Naive thymus-derived CD4-positive, alpha-beta T cell (primary cell): ENCODE measurements at regions of chr3 and their contacts with region 1.

Region 1: DNA sequence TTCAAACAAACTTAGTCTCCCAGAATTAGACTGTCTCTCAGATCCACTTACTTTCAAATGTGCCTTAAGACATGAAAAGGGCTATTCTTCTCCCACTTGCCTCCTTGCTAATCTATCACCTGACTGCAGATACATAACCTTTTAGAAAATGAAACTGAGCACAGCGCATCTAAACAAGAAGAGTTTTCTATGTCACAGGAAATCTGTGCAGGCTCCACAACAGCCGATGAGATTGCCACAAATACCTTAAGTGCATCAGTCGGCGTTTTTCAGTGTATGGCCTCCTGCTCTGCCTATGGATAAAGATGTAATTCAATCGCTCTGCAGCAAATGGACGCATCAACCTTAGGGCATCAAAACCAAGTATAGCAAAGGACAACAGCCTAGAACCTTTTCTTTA is 544.2 kb downstream of the FOXP1 start:
- DNase-seq: peak in 6 of 9 donors; percentile 39 to 61 (median 48)
- ATAC-seq: peak; percentile 85
- H3K4me3 ChIP-seq: no peak overlapping the region
- H3K4me3 Mint-ChIP-seq: peak overlapping the region; percentile 28 to 79 (median 67)
- H3K27ac ChIP-seq: peak overlapping the region; percentile 16
- H3K27ac Mint-ChIP-seq: peak overlapping the region; percentile 66 to 91 (median 81)
- H3K4me1 ChIP-seq: peaks cover 15 to 55% of the 10 kb centered on the region in 2 donors
- H3K4me1 Mint-ChIP-seq: peaks cover 45 to 99% (median 90%) of the 10 kb centered on the region in 7 donors
- H3K27me3 ChIP-seq: no peaks in the 10 kb centered on the region
- H3K27me3 Mint-ChIP-seq: no peaks in the 10 kb centered on the region

Region 2: DNA sequence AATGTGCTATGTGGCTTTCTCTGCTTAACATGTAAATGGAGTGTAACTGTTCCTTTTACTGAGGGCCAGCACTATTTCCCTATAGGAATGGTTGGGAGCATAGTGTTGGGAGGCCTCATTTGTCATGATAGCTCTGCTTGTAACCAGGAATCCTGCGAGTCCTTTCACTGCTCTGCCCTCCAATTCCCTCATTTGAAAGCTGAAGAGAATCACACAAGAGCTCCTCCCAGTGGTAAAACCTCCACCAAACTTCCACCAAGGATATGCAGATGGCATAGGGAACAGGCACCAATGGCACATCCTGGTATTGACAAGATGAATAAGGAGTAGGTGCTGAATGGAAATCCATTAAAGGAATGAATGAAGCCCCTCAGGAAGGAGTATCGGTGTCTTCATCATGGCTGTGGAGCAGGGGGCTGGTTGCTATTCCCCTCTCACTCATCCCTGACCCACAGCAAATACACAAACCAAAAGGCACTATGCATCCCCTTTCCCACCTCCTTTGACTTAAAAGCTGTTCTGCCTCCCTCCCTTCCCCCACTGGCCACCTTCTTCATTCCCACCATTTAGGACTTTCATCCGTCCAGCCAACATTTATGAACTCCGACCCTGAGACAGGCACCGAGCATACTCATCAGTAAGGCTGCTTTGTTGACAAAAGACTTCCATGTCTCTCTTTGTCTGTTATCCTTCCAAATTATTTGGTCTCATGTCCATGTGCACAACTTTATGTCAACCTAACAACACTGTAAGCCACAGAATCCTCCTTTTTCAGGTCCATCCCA is 16.6 kb before region 1 on chr3:
- CTCF ChIA-PET with region 1: no interaction called
- POLR2A ChIA-PET with region 1: interaction called, 4 read pairs
- intact Hi-C with region 1: loop called in 1 of 2 experiments (anchors 2 kb)
- DNase-seq: no peak
- ATAC-seq: no peak
- H3K4me3 ChIP-seq: no peak overlapping the region
- H3K4me3 Mint-ChIP-seq: peak overlapping the region in 2 of 10 donors; percentile 6 to 32
- H3K27ac ChIP-seq: no peak overlapping the region
- H3K27ac Mint-ChIP-seq: peak overlapping the region in 8 of 9 donors; percentile 12 to 85 (median 72)
- H3K4me1 ChIP-seq: peaks cover 0 to 43% of the 10 kb centered on the region in 2 donors
- H3K4me1 Mint-ChIP-seq: peaks cover 37 to 94% (median 85%) of the 10 kb centered on the region in 7 donors
- H3K27me3 ChIP-seq: no peaks in the 10 kb centered on the region
- H3K27me3 Mint-ChIP-seq: no peaks in the 10 kb centered on the region

Region 3: GRCh38 chr3:71050538-71051258 is 11.4 kb after region 1 on chr3:
- CTCF ChIA-PET with region 1: interaction called, 5 read pairs
- POLR2A ChIA-PET with region 1: interaction called, 3 read pairs
- intact Hi-C with region 1: loop called in 1 of 2 experiments (anchors 1 kb)
- DNase-seq: peak in 7 of 9 donors; percentile 52 to 82 (median 75)
- ATAC-seq: peak; percentile 97
- H3K4me3 ChIP-seq: no peak overlapping the region
- H3K4me3 Mint-ChIP-seq: peak overlapping the region in 8 of 10 donors; percentile 45 to 83 (median 64)
- H3K27ac ChIP-seq: peak overlapping the region; percentile 71
- H3K27ac Mint-ChIP-seq: peak overlapping the region in 6 of 9 donors; percentile 78 to 99 (median 95)
- H3K4me1 ChIP-seq: peaks cover 24 to 98% of the 10 kb centered on the region in 2 donors
- H3K4me1 Mint-ChIP-seq: peaks cover 73 to 100% (median 100%) of the 10 kb centered on the region in 7 donors
- H3K27me3 ChIP-seq: no peaks in the 10 kb centered on the region
- H3K27me3 Mint-ChIP-seq: no peaks in the 10 kb centered on the region

Region 4: DNA sequence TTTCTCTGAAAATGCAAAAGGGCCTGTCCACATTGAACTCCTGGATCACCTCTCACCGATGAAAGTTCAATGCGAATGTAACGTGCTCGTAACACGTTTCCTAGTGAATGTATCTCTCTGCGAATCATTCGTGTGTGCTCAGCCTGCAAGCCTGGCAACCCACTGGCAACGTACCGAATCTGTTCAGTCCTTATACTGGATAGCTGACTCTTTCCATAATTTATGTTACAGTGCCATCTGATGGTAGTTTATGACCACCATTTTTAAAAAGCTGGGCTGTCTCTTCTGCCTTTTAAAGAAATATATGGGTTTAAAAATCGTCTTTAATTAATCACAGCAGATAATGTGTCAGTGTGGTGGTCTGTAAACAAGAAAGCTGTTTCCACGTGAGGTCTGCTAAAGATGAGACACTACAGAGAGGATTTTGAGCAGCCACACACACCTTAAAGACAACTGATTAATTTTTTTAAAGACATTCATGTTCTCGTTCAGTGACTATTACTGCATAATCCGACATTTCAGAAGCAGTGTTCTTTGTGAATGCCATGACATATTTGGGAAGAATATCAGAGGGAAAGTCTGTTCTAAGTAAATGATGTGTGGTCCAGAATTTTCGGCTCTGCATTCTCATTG is 613.6 kb after region 1 on chr3:
- CTCF ChIA-PET with region 1: no interaction called
- POLR2A ChIA-PET with region 1: no interaction called
- intact Hi-C with region 1: no loop called
- DNase-seq: peak in 6 of 9 donors; percentile 3 to 42 (median 23)
- ATAC-seq: peak; percentile 53
- H3K4me3 ChIP-seq: no peak overlapping the region
- H3K4me3 Mint-ChIP-seq: peak overlapping the region in 1 of 10 donors; percentile 23
- H3K27ac ChIP-seq: no peak overlapping the region
- H3K27ac Mint-ChIP-seq: no peak overlapping the region
- H3K4me1 ChIP-seq: no peaks in the 10 kb centered on the region
- H3K4me1 Mint-ChIP-seq: peaks cover 0 to 5% (median 0%) of the 10 kb centered on the region in 7 donors
- H3K27me3 ChIP-seq: no peaks in the 10 kb centered on the region
- H3K27me3 Mint-ChIP-seq: no peaks in the 10 kb centered on the region